ENCODE measurements at regions of chr11 and their contacts with region 1.

Region 1: DNA sequence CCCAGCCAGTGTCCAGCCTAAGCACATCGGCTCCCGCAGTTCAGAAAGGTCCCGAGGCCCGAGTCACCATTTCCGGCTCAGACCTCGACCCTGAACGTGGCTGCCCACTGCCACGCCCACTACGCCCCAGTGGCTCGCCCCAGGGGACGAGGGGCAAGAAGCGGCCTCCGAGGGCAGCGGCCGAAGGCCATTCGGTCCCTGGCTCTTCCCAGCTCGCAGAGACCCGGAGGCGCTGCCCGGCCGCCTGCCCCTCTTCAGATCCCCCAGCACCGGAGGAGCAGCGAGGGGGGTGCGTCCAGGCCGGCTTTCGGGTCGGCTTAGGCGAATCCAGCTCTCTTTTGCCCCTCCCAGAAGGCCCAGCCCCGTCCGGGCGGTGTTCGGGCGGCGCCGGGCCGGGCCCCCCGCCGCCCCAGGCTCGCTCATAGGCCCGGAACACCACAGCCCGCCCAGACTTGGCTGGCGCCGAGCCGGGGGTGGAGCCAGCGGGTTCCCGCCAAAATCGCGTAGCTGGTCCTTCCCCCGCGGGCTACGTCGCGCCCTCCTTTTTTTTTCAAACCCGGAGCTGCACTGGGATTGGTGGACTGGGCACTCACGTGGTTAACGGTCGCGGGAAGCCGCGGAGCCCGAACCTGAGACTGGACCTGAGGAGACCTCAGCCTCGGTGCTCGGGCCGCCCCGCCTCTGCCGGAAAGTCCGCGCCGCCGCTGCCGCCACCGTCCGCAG is at the start of gene WEE1:
- DNase-seq: peak; percentile 98
- ATAC-seq: peak; percentile 97
- total RNA-seq, gene WEE1: 40.1 TPM

Region 2: GRCh38 chr11:9460322-9461067 is 112.7 kb before region 1 on chr11 and contains the start of gene ZNF143:
- intact Hi-C with region 1: loop called (anchors 2 kb)
- DNase-seq: peak; percentile 100
- ATAC-seq: peak; percentile 98
- total RNA-seq, gene ZNF143: 22.7 TPM

Region 3: GRCh38 chr11:9619753-9620365 is 46.6 kb after region 1 on chr11:
- intact Hi-C with region 1: no loop called
- DNase-seq: no peak
- ATAC-seq: no peak